ENCODE measurements at regions of chr2 and their contacts with region 1.

Region 1: DNA sequence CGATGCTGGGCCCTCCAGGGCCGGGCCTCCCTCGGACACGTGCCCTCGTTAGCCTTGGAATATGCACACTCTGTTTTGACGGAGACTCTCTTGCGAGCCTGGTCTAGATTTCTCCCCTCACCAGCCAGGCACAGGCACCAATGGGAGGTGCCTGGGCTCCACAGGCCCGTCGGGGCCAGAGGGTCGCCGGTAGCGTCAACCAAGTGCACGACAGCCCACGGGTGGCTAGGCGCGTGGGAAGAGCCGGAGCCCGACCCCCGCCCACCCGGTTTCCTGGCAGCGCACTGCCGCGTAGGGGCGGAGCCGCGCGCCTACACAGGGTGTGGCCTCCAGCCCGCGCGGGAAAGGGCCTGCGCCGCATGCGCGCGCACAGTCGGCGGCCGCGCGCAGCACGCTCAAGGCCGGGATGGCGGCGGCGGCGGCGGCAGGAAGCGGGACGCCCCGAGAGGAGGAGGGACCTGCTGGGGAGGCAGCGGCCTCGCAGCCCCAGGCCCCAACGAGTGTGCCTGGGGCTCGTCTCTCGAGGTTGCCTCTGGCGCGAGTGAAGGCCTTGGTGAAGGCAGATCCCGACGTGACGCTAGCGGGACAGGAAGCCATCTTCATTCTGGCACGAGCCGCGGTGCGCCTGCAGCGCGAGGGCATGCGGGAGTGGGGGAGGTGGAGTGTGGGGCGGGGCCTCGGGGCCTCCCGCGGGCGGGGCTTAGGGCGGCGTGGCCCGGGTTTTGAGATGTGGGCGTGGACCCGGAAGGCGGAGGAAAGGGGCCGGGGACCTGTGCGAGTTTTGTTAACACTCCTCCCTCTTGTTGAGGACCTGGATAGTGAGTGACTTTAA is at the start of gene POLE4:
- DNase-seq: peak; percentile 89 to 96 (median 93)
- ATAC-seq: peak; percentile 85
- H3K4me3 ChIP-seq: peak within 1 kb of the TSS; percentile 58 to 87
- H3K4me3 Mint-ChIP-seq: peak within 1 kb of the TSS; percentile 83
- H3K27ac ChIP-seq: peak within 1 kb of the TSS; percentile 80 to 83
- H3K27ac Mint-ChIP-seq: peak within 1 kb of the TSS; percentile 89
- H3K4me1 ChIP-seq: peaks cover 16% of the 10 kb centered on the region
- H3K4me1 Mint-ChIP-seq: peaks cover 55% of the 10 kb centered on the region
- H3K27me3 ChIP-seq: no peaks in the 10 kb centered on the region
- H3K27me3 Mint-ChIP-seq: no peaks in the 10 kb centered on the region
- CTCF ChIP-seq: no peak
- total RNA-seq, gene POLE4: 32.7 to 35.8 TPM

Region 2: DNA sequence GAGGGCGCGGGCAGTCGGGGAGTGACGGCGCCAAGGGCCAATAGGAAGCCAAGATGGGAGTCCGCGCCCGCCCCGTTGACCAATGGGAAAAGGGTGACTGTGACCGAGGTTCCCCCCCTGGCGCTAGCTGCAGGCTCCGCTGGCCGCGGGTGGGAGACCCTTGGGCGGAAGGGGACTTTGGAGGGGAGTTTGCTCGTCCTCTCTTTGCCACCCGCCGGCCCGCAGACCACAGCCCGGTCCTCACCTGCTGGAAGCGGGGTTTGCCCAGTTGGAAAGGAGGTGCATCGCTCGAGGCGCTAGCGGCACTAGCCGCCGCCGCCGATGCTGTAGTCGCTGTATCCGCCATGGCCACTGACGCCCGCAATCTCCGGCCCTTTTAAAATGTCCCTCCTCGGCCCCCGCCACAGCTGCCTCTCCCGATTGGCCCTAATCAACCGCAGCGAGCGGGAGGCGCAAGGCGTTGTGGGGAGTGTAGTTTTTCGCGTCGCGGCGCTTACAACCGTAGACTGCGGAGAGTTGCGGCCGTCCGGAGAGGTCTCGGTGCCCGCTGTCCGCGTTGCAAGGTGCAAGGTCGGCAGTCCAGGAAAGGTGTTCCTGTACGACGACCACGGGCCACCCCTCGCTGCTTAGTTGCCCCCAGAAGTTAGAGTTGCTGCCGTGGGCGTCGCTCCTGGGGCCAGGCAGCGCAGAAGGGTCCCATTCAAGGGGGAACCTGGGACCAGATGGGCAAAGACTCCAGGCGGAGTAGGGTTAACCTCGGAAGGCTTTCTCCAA is 1886.9 kb before region 1 on chr2 and contains the start of gene SFXN5:
- CTCF ChIA-PET with region 1: no interaction called
- POLR2A ChIA-PET with region 1: no interaction called
- intact Hi-C with region 1: loop called in 1 of 2 experiments (anchors 5 kb)
- DNase-seq: peak; percentile 89 to 98 (median 95)
- ATAC-seq: peak; percentile 82
- H3K4me3 ChIP-seq: peak within 1 kb of the TSS; percentile 94 to 95
- H3K4me3 Mint-ChIP-seq: peak within 1 kb of the TSS; percentile 96
- H3K27ac ChIP-seq: peak within 1 kb of the TSS; percentile 73 to 86
- H3K27ac Mint-ChIP-seq: peak within 1 kb of the TSS; percentile 92
- H3K4me1 ChIP-seq: peaks cover 13% of the 10 kb centered on the region
- H3K4me1 Mint-ChIP-seq: peaks cover 41% of the 10 kb centered on the region
- H3K27me3 ChIP-seq: no peaks in the 10 kb centered on the region
- H3K27me3 Mint-ChIP-seq: no peaks in the 10 kb centered on the region
- CTCF ChIP-seq: no peak
- total RNA-seq, gene SFXN5: 6.1 to 9.3 TPM

Region 3: GRCh38 chr2:73385595-73386341 is 1572.7 kb before region 1 on chr2 and contains the start of gene ALMS1:
- CTCF ChIA-PET with region 1: no interaction called
- POLR2A ChIA-PET with region 1: no interaction called
- intact Hi-C with region 1: loop called in 1 of 2 experiments (anchors 5 kb)
- DNase-seq: peak; percentile 76 to 96 (median 86)
- ATAC-seq: peak; percentile 88
- H3K4me3 ChIP-seq: peak within 1 kb of the TSS; percentile 75 to 88
- H3K4me3 Mint-ChIP-seq: peak within 1 kb of the TSS; percentile 88
- H3K27ac ChIP-seq: peak within 1 kb of the TSS; percentile 88 to 90
- H3K27ac Mint-ChIP-seq: peak within 1 kb of the TSS; percentile 94
- H3K4me1 ChIP-seq: peaks cover 20% of the 10 kb centered on the region
- H3K4me1 Mint-ChIP-seq: peaks cover 39% of the 10 kb centered on the region
- H3K27me3 ChIP-seq: no peaks in the 10 kb centered on the region
- H3K27me3 Mint-ChIP-seq: peaks cover 2% of the 10 kb centered on the region
- CTCF ChIP-seq: no peak
- total RNA-seq, gene ALMS1: 14.8 to 16.4 TPM

Region 4: GRCh38 chr2:74458132-74458925 is 500.2 kb before region 1 on chr2 and contains the start of gene WBP1:
- CTCF ChIA-PET with region 1: no interaction called
- POLR2A ChIA-PET with region 1: no interaction called
- intact Hi-C with region 1: loop called in 1 of 2 experiments (anchors 2 kb)
- DNase-seq: peak; percentile 96 to 100 (median 98)
- ATAC-seq: peak; percentile 77
- H3K4me3 ChIP-seq: peak within 1 kb of the TSS; percentile 84 to 95
- H3K4me3 Mint-ChIP-seq: peak within 1 kb of the TSS; percentile 97
- H3K27ac ChIP-seq: peak within 1 kb of the TSS; percentile 93 to 100
- H3K27ac Mint-ChIP-seq: peak within 1 kb of the TSS; percentile 99
- H3K4me1 ChIP-seq: peaks cover 34% of the 10 kb centered on the region
- H3K4me1 Mint-ChIP-seq: peaks cover 57% of the 10 kb centered on the region
- H3K27me3 ChIP-seq: no peaks in the 10 kb centered on the region
- H3K27me3 Mint-ChIP-seq: no peaks in the 10 kb centered on the region
- CTCF ChIP-seq: no peak
- total RNA-seq, gene WBP1: 68.5 to 70.6 TPM

Region 5: DNA sequence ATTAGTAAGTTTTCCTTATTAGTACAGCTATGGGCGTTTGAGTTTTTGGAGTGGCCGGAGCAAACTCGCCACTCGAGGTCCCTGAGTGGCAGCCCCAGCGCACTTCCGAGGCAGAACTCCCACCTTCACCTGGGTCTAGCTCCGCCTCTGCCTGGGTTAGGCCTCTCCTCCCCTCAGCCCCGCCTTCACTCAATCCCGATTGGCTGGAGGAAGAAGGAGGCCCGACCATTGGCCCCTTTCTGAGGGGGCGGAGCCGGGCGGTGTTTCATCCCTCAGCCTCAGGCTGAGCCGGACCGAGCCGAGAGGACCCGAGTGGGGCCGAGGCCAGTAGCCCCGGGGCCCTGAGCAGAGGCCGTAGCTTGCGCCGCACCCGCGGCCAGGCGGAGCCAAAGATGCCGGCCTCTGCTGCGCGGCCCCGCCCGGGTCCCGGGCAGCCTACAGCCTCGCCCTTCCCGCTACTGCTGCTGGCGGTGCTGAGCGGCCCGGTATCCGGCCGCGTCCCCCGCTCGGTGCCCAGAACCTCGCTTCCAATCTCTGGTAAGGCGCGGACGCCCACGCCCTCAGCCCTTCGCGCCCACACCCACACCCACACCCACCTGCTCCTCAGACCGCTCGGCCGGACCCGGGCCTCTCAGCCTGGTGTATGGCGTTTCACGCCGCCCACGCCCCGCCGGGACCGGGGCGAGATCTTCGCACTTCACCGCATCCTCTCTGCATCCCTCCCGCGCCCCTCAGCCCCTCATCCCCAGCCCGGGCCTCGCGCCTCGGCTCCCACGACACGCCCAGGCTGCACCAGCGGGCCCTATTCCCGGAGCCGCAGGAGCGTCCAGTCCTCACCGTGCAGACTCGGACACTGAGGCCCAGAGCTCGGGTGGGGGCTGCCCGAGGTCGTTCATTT is 304.3 kb before region 1 on chr2 and contains the start of gene SEMA4F:
- CTCF ChIA-PET with region 1: no interaction called
- POLR2A ChIA-PET with region 1: no interaction called
- intact Hi-C with region 1: loop called (anchors 2 kb)
- DNase-seq: peak; percentile 85 to 96 (median 93)
- ATAC-seq: peak; percentile 99
- H3K4me3 ChIP-seq: peak within 1 kb of the TSS; percentile 76 to 78
- H3K4me3 Mint-ChIP-seq: peak within 1 kb of the TSS; percentile 90
- H3K27ac ChIP-seq: peak within 1 kb of the TSS in 1 of 2 experiments; percentile 48
- H3K27ac Mint-ChIP-seq: peak within 1 kb of the TSS; percentile 79
- H3K4me1 ChIP-seq: peaks cover 12% of the 10 kb centered on the region
- H3K4me1 Mint-ChIP-seq: peaks cover 19% of the 10 kb centered on the region
- H3K27me3 ChIP-seq: no peaks in the 10 kb centered on the region
- H3K27me3 Mint-ChIP-seq: peaks cover 11% of the 10 kb centered on the region
- CTCF ChIP-seq: no peak
- total RNA-seq, gene SEMA4F: 4.6 to 5.9 TPM

Region 6: GRCh38 chr2:75416420-75417342 is 458.2 kb after region 1 on chr2:
- CTCF ChIA-PET with region 1: no interaction called
- POLR2A ChIA-PET with region 1: no interaction called
- intact Hi-C with region 1: loop called in 1 of 2 experiments (anchors 5 kb)
- DNase-seq: peak in 5 of 9 experiments; percentile 10 to 69 (median 50)
- ATAC-seq: peak; percentile 95
- H3K4me3 ChIP-seq: peak overlapping the region; percentile 39 to 48
- H3K4me3 Mint-ChIP-seq: peak overlapping the region; percentile 91
- H3K27ac ChIP-seq: peak overlapping the region; percentile 43 to 60
- H3K27ac Mint-ChIP-seq: peak overlapping the region; percentile 95
- H3K4me1 ChIP-seq: peaks cover 17% of the 10 kb centered on the region
- H3K4me1 Mint-ChIP-seq: peaks cover 50% of the 10 kb centered on the region
- H3K27me3 ChIP-seq: no peaks in the 10 kb centered on the region
- H3K27me3 Mint-ChIP-seq: no peaks in the 10 kb centered on the region
- CTCF ChIP-seq: no peak

Region 7: DNA sequence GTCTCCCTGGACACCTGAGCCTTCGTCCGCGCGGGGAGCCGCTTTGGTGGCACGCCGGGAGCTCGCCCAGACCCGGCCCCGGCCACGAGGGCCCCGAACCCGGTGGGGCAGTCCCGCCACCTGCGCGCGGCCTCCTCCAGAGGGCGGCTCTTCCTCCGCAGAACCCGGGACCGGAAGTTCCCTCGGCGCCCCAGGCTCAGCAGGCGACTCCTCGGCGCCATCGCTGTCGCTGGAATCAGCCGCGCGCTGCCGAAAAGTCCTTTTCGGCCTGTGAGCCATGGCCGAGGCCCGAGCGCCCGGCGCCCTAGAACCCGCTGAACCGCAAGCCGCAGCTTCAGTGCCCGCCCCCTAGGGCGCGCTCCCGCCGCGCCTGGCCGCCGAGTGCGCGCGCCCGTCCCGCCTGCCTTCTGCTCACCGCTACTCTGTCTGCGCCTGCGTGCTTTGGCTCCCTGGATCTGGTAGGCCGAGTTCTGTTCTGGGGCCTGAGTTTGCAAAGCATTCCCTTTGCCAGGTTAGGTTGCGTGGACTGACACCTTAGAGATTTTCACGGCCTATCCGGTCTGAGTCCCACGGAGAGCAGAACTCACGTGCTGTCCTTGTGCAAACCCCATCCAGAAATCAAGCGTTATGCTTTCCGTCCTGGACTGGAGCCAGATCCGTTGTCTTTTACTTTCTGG is 752.2 kb after region 1 on chr2 and contains the start of gene GCFC2:
- CTCF ChIA-PET with region 1: no interaction called
- POLR2A ChIA-PET with region 1: no interaction called
- intact Hi-C with region 1: loop called in 1 of 2 experiments (anchors 5 kb)
- DNase-seq: peak; percentile 59 to 91 (median 80)
- ATAC-seq: peak; percentile 88
- H3K4me3 ChIP-seq: peak within 1 kb of the TSS; percentile 56 to 59
- H3K4me3 Mint-ChIP-seq: peak within 1 kb of the TSS; percentile 95
- H3K27ac ChIP-seq: peak within 1 kb of the TSS; percentile 74 to 80
- H3K27ac Mint-ChIP-seq: peak within 1 kb of the TSS; percentile 98
- H3K4me1 ChIP-seq: peaks cover 21% of the 10 kb centered on the region
- H3K4me1 Mint-ChIP-seq: peaks cover 34% of the 10 kb centered on the region
- H3K27me3 ChIP-seq: no peaks in the 10 kb centered on the region
- H3K27me3 Mint-ChIP-seq: no peaks in the 10 kb centered on the region
- CTCF ChIP-seq: peak; percentile 27
- total RNA-seq, gene GCFC2: 14.4 to 17.8 TPM